ENCODE measurements at regions of chr5 and their contacts with region 1.

Region 1: GRCh38 chr5:84255315-84255714 is 129.4 kb downstream of the EDIL3 start:
- DNase-seq: no peak
- ATAC-seq: no peak
- H3K4me3 ChIP-seq: no peak overlapping the region
- H3K27ac ChIP-seq: no peak overlapping the region
- H3K4me1 ChIP-seq: no peaks in the 10 kb centered on the region
- H3K27me3 ChIP-seq: no peaks in the 10 kb centered on the region
- CTCF ChIP-seq: peak in 2 of 9 donors; percentile 7 to 8

Region 2: GRCh38 chr5:83721953-83722901 is 533.1 kb before region 1 on chr5:
- intact Hi-C with region 1: loop called in 1 of 10 experiments (anchors 10 kb)
- DNase-seq: peak; percentile 46 to 51
- ATAC-seq: peak; percentile 68 to 89 (median 78)
- H3K4me3 ChIP-seq: peak overlapping the region; percentile 36 to 63 (median 52)
- H3K27ac ChIP-seq: peak overlapping the region in 5 of 10 donors; percentile 44 to 75 (median 57)
- H3K4me1 ChIP-seq: peaks cover 0 to 12% (median 9%) of the 10 kb centered on the region in 9 donors
- H3K27me3 ChIP-seq: peaks cover 0 to 76% (median 41%) of the 10 kb centered on the region in 7 donors
- CTCF ChIP-seq: peak in 7 of 9 donors; percentile 17 to 52 (median 32)

Region 3: GRCh38 chr5:83877911-83878706 is 377.2 kb before region 1 on chr5:
- intact Hi-C with region 1: no loop called
- DNase-seq: no peak
- ATAC-seq: no peak
- H3K4me3 ChIP-seq: peak overlapping the region in 1 of 10 donors; percentile 7
- H3K27ac ChIP-seq: peak overlapping the region in 1 of 10 donors; percentile 4
- H3K4me1 ChIP-seq: no peaks in the 10 kb centered on the region
- H3K27me3 ChIP-seq: no peaks in the 10 kb centered on the region
- CTCF ChIP-seq: no peak

Region 4: GRCh38 chr5:83964271-83964670 is 291.0 kb before region 1 on chr5:
- intact Hi-C with region 1: no loop called
- DNase-seq: no peak
- ATAC-seq: no peak
- H3K4me3 ChIP-seq: no peak overlapping the region
- H3K27ac ChIP-seq: no peak overlapping the region
- H3K4me1 ChIP-seq: no peaks in the 10 kb centered on the region
- H3K27me3 ChIP-seq: no peaks in the 10 kb centered on the region
- CTCF ChIP-seq: no peak

Region 5: GRCh38 chr5:84474126-84474525 is 218.8 kb after region 1 on chr5:
- intact Hi-C with region 1: loop called in 1 of 10 experiments (anchors 10 kb)
- DNase-seq: no peak
- ATAC-seq: no peak
- H3K4me3 ChIP-seq: no peak overlapping the region
- H3K27ac ChIP-seq: no peak overlapping the region
- H3K4me1 ChIP-seq: no peaks in the 10 kb centered on the region
- H3K27me3 ChIP-seq: no peaks in the 10 kb centered on the region
- CTCF ChIP-seq: no peak

Region 6: DNA sequence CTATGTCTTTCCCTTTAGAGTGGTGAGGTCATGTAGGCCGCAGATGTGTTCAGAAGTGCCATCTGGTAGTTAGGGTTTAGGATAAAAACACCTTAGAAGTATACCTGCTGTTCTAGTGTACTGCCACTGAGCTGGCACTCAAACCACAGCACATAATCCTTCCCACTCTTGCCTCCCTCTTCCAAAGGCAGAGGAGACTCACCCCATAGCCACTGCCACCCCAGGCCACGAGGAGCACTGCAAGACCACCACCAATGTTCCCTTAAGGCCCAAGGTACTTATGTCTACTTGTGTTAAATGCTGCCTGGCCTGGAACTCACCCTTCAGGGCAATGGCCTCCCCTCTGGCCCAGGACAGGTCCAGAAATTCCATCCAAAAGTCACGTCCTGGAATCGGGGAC is 508.9 kb after region 1 on chr5:
- intact Hi-C with region 1: no loop called
- DNase-seq: no peak
- ATAC-seq: no peak
- H3K4me3 ChIP-seq: no peak overlapping the region
- H3K27ac ChIP-seq: no peak overlapping the region
- H3K4me1 ChIP-seq: no peaks in the 10 kb centered on the region
- H3K27me3 ChIP-seq: no peaks in the 10 kb centered on the region
- CTCF ChIP-seq: no peak

Measured in heart right ventricle (tissue), 16 donors.